ENCODE measurements at regions of chr3 and their contacts with region 1.

Region 1: DNA sequence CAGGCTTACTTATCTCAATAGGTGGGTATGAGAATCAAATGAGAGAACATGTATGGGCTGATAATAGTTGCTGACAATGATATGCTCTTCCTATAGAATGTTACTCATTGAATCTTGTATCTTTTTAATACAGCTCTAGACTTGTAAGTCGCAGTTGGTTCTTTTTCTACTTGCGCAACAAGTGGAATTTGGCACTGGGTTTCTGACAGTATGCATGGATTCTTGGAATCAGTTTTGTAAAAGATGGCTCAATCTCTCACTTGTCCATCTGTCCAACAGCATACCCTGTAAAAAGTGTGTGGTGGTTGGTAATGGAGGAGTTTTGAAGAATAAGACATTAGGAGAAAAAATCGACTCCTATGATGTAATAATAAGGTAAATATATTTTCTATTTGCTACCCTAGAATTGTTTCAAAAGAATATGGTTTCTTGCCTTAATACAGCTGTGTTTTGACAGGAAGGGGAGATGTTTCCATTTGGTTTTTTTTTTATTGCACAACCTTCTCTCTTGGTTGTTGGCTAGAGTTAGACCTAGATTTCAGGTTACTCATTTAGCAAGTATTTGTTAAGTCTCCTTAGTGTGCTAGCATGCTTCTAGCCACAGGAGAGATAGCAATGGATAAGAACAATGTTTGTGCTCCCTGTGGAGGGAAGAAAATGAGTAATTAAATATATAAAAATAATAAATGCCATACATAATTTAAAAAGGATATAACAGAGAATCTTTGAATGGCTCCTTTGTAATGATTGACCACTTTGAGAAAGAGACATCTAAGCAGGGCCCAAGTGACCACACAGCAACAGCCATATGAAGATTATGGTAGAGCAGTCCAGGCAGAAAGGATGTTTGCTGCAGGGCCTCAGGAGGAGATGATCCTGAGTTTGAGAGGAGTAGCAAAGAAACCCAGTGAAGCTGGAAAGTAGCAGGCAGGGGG is 21.8 kb downstream of the ST3GAL6 start:
- DNase-seq: no peak
- ATAC-seq: peak; percentile 71
- H3K4me3 ChIP-seq: no peak overlapping the region
- H3K27ac ChIP-seq: peak overlapping the region; percentile 69 to 100
- H3K4me1 ChIP-seq: peaks cover 17 to 33% of the 10 kb centered on the region in 2 donors
- H3K27me3 ChIP-seq: no peaks in the 10 kb centered on the region

Region 2: DNA sequence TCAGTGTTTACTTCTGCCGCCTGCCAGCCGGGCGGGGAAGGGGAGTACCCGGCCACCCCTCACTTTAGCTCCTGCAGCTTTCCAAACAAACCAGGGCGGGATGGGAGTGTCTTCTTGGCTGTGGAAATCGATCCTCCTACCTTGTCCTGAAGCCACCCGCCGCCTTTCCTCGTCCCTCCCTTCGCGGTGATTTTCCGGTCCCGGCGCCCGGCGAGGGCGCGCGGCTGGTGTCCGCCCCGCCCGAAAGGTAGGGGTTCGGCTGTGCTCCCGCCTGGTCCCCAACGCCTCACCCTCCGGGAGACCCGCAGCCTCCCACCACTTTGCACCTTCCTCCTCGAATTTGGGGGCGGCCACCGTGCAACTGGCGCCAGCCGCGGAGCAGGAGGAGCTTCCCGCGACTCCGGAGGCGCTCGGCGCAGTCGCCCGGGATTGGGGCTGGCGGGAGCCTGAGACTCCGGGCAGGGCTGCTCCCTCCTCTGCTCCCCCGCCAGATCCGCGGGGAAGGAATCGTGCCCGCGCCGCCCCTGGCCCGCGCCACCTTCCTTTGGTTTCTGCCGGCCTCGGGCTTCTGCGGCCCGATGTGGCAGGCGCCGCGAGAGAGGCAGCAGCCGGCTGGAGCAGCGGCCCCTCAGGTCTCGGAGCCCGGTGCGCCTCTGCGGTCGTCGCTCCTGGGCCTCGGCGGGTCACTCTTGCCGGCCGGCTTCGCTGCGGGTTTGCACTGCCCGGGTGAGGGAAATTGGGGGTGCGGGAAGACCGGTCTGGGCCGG is 52.5 kb before region 1 on chr3:
- intact Hi-C with region 1: loop called (anchors 5 to 10 kb)
- DNase-seq: peak; percentile 65 to 84
- ATAC-seq: peak; percentile 86
- H3K4me3 ChIP-seq: peak overlapping the region; percentile 69 to 81
- H3K27ac ChIP-seq: peak overlapping the region; percentile 72 to 74
- H3K4me1 ChIP-seq: no peaks in the 10 kb centered on the region
- H3K27me3 ChIP-seq: no peaks in the 10 kb centered on the region

Measured in aorta (tissue), 5 donors.